G401 (cell line): ENCODE measurements at regions of chr16 and their contacts with region 1.

Region 1: DNA sequence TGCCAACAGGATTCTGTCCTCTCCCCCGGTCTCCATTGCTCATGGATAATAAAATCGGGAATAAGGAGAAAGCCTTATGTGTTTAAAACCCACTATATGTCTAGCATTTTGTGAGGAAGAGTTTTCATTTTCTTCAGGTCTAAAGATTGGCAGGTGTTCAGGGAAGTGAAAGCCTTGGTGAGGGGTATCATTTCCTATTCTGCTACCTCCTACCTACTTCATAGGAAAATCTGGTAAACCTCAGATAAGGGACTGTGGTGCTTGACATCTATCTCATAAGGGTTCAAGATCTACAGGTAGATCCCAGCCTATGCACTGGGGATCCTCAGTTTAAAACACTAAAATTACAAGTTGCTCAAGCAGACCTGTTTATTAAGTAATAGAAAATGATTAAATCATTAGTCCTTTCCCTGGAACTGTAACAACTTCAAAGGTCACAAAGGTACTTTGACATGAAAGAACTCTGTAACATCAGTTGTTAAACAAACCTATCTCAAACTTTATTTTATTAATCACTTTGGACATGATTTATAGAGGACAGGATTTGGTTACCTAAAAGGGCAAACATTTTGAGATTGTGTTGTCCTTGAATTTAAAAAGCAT is 6.5 kb downstream of the MOSMO start:
- DNase-seq: no peak

Region 2: DNA sequence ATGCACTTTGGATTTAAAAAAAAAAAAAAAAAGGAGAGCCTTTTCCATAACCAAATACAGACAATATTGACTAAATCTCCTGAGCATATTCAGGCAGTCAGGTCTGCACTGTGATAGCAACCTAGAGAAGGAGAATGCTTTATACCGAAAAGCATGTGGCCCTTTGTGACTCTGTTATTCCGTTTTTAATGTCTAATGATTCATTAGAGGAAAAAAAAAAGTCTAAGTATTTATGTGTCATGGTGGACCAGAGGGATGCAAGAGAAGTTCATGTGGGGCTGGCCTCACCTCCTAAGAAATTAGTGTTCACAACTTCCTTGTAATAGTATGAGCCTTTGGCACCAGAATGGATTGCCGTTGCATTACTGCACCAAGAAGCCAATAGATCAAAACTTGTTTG is 66.7 kb after region 1 on chr16:
- in situ Hi-C with region 1: loop called (anchors 10 kb)
- DNase-seq: no peak

Region 3: DNA sequence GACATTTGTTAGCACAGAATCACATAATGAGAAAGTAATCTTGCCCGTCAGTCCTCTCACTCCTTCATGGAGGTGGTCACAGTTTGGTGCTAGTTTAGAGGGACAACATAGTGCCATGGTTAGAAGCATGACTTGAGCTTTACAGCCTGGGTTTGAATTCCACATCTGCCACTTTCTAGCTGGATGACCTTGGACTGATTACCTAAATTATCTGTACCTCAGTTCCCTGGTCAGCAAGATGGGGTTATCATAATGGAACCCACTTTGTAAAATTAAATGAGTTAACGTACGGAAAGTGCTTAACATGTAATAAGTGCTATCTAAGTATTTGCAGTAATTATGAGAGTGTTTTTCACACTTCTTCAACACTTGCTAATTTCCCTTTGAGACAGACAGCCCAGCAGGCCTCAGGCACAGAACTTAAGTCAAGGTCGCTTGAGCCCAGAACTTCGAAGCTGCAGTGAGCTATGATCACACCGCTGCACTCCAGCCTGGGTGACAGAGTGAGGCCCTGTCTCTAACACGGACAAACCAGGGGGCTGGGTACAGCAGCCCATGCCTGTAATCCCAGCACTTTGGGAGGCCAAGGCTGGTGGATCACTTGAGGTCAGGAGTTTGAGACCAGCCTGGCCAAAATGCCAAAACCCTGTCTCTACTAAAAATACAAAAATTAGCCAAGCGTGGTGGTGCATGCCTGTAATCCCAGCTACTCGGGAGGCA is 85.0 kb after region 1 on chr16:
- in situ Hi-C with region 1: no loop called
- DNase-seq: no peak